ENCODE measurements at regions of chr15 and their contacts with region 1.

Region 1: GRCh38 chr15:27046880-27047279 is 75.9 kb downstream of the GABRG3 start:
- DNase-seq: no peak
- ATAC-seq: no peak
- H3K4me3 Mint-ChIP-seq: no peak overlapping the region
- H3K27ac Mint-ChIP-seq: no peak overlapping the region
- H3K4me1 Mint-ChIP-seq: no peaks in the 10 kb centered on the region
- H3K27me3 Mint-ChIP-seq: no peaks in the 10 kb centered on the region

Region 2: GRCh38 chr15:26983822-26984221 is 63.1 kb before region 1 on chr15:
- CTCF ChIA-PET with region 1: no interaction called
- POLR2A ChIA-PET with region 1: no interaction called
- intact Hi-C with region 1: no loop called
- DNase-seq: peak; percentile 20
- ATAC-seq: no peak
- H3K4me3 Mint-ChIP-seq: no peak overlapping the region
- H3K27ac Mint-ChIP-seq: no peak overlapping the region
- H3K4me1 Mint-ChIP-seq: no peaks in the 10 kb centered on the region
- H3K27me3 Mint-ChIP-seq: peaks cover 5% of the 10 kb centered on the region

Region 3: DNA sequence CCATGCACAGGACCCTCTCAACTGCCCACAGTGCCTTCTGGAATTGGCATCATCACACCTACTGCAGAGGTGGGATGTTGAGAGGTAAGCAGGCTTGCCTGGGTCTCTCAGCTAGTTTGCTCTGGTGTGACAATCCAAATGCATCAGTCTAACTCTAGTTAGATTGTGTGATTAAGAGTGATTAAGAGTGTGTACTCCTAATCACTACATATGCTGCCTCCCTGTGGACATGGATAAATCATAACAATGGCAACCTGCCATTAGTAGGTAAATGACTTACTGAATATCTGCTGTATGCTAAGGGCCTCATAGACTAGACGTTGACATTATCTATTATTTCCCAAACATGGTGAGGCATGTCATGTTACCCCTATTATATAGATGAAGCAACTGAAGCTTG is 710.2 kb after region 1 on chr15:
- CTCF ChIA-PET with region 1: no interaction called
- POLR2A ChIA-PET with region 1: no interaction called
- intact Hi-C with region 1: loop called in 1 of 2 experiments (anchors 10 kb)
- DNase-seq: no peak
- ATAC-seq: no peak
- H3K4me3 Mint-ChIP-seq: no peak overlapping the region
- H3K27ac Mint-ChIP-seq: no peak overlapping the region
- H3K4me1 Mint-ChIP-seq: no peaks in the 10 kb centered on the region
- H3K27me3 Mint-ChIP-seq: no peaks in the 10 kb centered on the region

Measured in activated CD4-positive, alpha-beta T cell treated with anti-CD3 and anti-CD28 coated beads for 36 hours (primary cell).